ENCODE measurements at regions of chr2 and their contacts with region 1.

Region 1: DNA sequence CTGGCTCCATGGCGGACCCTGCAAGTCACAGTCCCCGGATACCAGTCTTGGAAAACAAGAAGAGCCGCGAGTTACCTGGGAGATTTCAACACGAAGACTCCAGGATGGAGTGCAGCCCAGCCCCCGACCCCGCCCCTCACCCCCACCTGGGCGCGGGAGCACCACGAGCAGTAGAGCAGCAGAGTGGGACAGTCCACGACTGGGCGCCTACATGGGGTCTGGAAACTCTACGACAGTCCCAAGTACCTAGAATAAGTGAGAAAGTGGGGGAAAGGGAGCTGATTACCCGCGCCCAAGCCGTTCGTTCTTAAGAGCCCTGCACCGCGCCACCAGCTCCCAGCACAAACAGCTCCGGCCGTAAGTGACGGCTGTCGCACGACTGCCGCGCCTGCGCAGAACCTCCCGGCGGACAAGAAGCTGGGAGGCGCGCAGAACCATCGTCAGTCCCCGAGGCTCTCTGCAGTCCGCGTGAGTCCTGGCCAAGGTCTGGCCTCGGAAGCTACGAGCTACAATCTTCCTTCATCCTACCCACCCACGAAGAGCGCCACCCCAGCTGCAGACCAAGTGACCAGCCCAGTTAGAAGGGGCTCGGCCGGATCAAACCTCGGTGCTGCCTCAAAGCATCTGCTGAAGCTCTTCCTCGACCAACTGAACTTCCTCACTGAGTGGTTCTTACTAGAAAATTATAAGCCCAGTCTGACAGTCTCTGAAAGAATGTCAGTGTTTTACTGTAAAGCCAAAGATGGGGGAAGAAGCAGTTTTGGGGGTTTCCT is at the start of gene DPY30:
- DNase-seq: peak; percentile 93
- ATAC-seq: peak; percentile 98
- H3K4me3 Mint-ChIP-seq: peak within 1 kb of the TSS; percentile 87
- H3K27ac Mint-ChIP-seq: peak within 1 kb of the TSS; percentile 93
- H3K4me1 Mint-ChIP-seq: peaks cover 20% of the 10 kb centered on the region
- H3K27me3 Mint-ChIP-seq: no peaks in the 10 kb centered on the region
- total RNA-seq, gene DPY30: 70.0 to 71.3 TPM

Region 2: GRCh38 chr2:32009516-32010256 is 29.9 kb before region 1 on chr2:
- CTCF ChIA-PET with region 1: interaction called, 10 read pairs
- POLR2A ChIA-PET with region 1: interaction called, 12 read pairs
- DNase-seq: peak; percentile 56
- ATAC-seq: peak; percentile 27
- H3K4me3 Mint-ChIP-seq: peak overlapping the region; percentile 93
- H3K27ac Mint-ChIP-seq: peak overlapping the region; percentile 86
- H3K4me1 Mint-ChIP-seq: peaks cover 48% of the 10 kb centered on the region
- H3K27me3 Mint-ChIP-seq: no peaks in the 10 kb centered on the region

Region 3: GRCh38 chr2:32058130-32058529 is 18.5 kb after region 1 on chr2:
- CTCF ChIA-PET with region 1: interaction called, 20 read pairs
- POLR2A ChIA-PET with region 1: interaction called, 49 read pairs
- DNase-seq: no peak
- ATAC-seq: no peak
- H3K4me3 Mint-ChIP-seq: no peak overlapping the region
- H3K27ac Mint-ChIP-seq: no peak overlapping the region
- H3K4me1 Mint-ChIP-seq: peaks cover 9% of the 10 kb centered on the region
- H3K27me3 Mint-ChIP-seq: peaks cover 2% of the 10 kb centered on the region

Region 4: DNA sequence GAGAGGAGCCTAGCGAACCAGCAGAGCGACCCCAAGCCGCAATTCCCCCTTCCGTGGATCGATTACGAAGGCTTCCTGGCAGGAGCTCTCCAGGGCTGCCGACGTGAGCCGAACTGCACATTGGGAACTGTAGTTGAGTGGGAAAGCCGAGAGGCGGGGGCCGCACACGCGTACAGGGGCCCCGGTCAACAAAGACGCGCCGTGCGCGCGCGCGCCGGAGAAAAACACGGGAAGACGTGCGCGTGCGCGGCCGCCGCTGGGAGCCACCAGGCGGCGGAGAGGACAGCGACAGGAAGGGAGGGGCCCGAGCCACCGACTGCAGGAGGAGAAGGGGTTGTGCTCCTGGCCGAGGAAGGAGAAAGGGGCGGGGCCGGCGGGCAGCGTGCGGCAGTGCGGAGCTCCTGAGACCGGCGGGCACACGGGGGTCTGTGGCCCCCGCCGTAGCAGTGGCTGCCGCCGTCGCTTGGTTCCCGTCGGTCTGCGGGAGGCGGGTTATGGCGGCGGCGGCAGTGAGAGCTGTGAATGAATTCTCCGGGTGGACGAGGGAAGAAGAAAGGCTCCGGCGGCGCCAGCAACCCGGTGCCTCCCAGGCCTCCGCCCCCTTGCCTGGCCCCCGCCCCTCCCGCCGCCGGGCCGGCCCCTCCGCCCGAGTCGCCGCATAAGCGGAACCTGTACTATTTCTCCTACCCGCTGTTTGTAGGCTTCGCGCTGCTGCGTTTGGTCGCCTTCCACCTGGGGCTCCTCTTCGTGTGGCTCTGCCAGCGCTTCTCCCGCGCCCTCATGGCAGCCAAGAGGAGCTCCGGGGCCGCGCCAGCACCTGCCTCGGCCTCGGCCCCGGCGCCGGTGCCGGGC is 23.9 kb after region 1 on chr2 and contains the start of gene SPAST:
- CTCF ChIA-PET with region 1: interaction called, 20 read pairs
- POLR2A ChIA-PET with region 1: interaction called, 49 read pairs
- DNase-seq: peak; percentile 97
- ATAC-seq: peak; percentile 98
- H3K4me3 Mint-ChIP-seq: peak within 1 kb of the TSS; percentile 93
- H3K27ac Mint-ChIP-seq: peak within 1 kb of the TSS; percentile 90
- H3K4me1 Mint-ChIP-seq: peaks cover 23% of the 10 kb centered on the region
- H3K27me3 Mint-ChIP-seq: peaks cover 2% of the 10 kb centered on the region
- total RNA-seq, gene SPAST: 18.6 to 19.0 TPM

Region 5: GRCh38 chr2:32166115-32166574 is 126.5 kb after region 1 on chr2:
- CTCF ChIA-PET with region 1: interaction called, 4 read pairs
- POLR2A ChIA-PET with region 1: interaction called, 11 read pairs
- DNase-seq: no peak
- ATAC-seq: peak; percentile 8
- H3K4me3 Mint-ChIP-seq: peak overlapping the region; percentile 99
- H3K27ac Mint-ChIP-seq: peak overlapping the region; percentile 93
- H3K4me1 Mint-ChIP-seq: peaks cover 27% of the 10 kb centered on the region
- H3K27me3 Mint-ChIP-seq: no peaks in the 10 kb centered on the region

Measured in activated CD8-positive, alpha-beta T cell treated with anti-CD3 and anti-CD28 coated beads, Interleukin-2, amount 10 ng/mL, durations not matched to agents 7 days and 5 days (primary cell).